Gastrocnemius medialis (tissue), 4 donors: ENCODE measurements at regions of chr14 and their contacts with region 1.

Region 1: DNA sequence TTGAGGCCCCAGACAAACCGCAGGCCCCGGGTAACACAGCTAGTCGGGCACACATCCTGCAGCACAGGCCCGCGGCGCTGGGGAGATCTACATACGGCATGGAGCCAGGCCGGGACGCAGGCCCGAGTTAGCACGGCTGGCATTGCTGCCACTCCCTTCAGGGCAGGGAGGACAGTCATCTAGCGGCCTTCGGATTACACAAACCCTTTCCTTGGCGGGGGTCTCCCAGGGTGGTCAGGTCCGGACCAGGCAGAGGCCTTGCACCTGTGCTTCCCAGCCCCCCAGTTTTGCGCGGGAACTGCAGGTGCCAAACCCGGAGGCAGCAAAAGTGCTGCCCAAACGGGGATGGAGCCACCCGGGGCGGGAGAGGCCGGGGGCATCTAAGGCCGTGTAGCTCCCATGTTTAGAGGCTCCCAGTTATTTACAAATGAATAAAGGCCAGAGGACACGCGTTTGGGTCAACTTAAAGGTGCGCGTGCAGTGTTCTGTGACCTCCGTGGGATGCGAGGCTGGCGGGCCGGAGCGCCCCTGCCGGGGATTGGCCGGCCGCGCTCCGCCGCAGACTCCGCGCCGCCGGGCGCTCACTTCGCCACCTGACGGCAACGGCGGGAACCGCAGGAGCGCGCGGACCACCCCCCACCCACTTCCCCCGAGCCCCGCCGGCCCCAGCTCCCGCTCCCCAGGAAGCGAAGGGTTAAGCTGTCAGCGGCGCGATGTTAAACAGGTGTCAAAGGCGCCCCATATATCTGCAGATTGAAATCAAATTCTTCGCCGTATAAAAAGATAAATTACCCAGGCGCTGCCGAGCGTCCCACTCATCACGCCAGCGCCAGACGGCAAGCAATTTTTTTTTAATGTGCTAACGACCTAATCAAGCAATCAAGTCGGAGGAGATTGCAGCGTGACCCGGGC is 18.1 kb downstream of the VSX2 start:
- DNase-seq: no peak
- ATAC-seq: peak; percentile 74 to 87
- H3K4me3 ChIP-seq: peak overlapping the region; percentile 66 to 83 (median 68)
- H3K27ac ChIP-seq: no peak overlapping the region
- H3K4me1 ChIP-seq: peaks cover 3 to 13% of the 10 kb centered on the region in 2 donors
- H3K27me3 ChIP-seq: peaks cover 10 to 13% (median 11%) of the 10 kb centered on the region in 3 donors
- CTCF ChIP-seq: peak; percentile 60 to 96 (median 74)
- POLR2A ChIP-seq: no peak

Region 2: DNA sequence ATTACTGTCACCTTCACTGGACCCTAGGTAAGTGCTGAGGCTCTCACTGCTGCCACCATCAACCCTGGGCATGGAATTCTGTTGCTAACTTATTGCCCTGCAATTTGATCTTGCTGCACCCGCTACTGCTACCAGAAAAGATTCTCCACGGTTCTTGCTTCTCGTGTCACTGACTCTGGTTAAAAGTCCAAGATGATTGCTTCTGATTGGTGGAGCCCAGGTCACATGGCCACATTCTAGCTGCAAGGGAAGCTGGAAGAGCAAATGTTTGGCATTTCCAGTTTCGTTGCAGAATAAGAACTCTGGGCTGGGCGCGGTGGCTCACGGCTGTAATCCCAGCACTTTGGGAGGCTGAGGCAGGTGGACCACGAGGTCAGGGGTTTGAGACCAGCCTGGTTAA is 25.6 kb before region 1 on chr14:
- in situ Hi-C with region 1: no loop called
- intact Hi-C with region 1: no loop called
- DNase-seq: no peak
- ATAC-seq: no peak
- H3K4me3 ChIP-seq: no peak overlapping the region
- H3K27ac ChIP-seq: no peak overlapping the region
- H3K4me1 ChIP-seq: no peaks in the 10 kb centered on the region
- H3K27me3 ChIP-seq: peaks cover 0 to 12% (median 4%) of the 10 kb centered on the region in 3 donors
- CTCF ChIP-seq: no peak
- POLR2A ChIP-seq: no peak

Region 3: DNA sequence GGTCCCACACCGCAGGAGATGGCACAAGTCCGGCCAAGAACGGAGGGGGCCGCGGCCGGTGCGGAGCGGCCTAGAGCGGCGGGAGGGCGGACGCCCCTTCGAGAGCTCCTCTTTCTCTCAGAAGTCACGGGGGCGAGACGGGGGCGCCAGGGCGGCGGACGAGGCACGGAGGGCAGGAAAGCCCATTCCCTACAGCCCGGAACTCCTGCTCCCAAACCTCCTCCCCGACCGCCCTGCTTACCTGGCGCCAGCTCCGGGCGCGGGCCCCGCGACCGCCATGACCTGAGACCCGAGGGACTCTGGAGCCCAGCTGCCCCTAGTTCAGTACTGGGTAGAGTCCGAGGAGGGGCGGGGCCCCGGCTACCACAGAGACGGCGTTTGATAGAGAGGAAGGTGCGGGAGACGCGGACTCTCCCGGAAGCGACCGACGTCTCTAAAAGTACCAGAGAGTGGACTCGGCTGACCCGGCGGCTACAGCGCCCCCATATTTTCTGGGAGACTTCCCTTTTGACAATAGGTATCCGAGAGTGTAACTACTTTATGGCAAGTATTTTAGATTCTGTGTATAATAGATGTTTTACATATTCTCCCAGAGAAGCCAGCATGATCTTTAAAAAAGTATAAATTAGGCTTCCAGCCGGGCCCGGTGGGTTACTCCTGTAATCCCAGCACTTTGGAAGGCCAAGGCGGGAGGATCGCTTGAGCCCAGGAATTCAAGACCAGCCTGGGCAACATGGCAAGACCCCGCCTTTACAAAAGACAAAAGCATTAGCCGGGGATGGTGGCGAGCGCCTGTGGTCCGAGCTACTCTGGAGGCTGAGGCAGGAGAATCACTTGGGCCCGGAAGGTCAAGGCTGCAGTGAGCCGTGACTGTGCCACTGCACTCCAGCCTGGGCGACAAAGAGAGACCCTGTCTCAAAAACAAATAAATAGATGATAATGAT is 45.6 kb after region 1 on chr14 and contains the start of gene ABCD4:
- in situ Hi-C with region 1: no loop called
- intact Hi-C with region 1: loop called (anchors 2 kb)
- DNase-seq: peak; percentile 89 to 92
- ATAC-seq: peak; percentile 98 to 99
- H3K4me3 ChIP-seq: peak within 1 kb of the TSS; percentile 80 to 95 (median 84)
- H3K27ac ChIP-seq: peak within 1 kb of the TSS; percentile 85 to 92 (median 90)
- H3K4me1 ChIP-seq: peaks cover 5 to 11% of the 10 kb centered on the region in 2 donors
- H3K27me3 ChIP-seq: no peaks in the 10 kb centered on the region
- CTCF ChIP-seq: peak in 2 of 5 experiments; percentile 38 to 42
- POLR2A ChIP-seq: peak; percentile 50 to 77
- total RNA-seq, gene ABCD4: 9.1 to 20.0 (median 11.5) TPM